PC-9 (cell line): ENCODE measurements at regions of chr3 and their contacts with region 1.

Region 1: GRCh38 chr3:196073188-196073838 is 8.6 kb downstream of the TFRC start:
- DNase-seq: peak in 1 of 2 experiments; percentile 68
- H3K4me3 ChIP-seq: no peak overlapping the region
- H3K27ac ChIP-seq: peak overlapping the region; percentile 10; the same call in 1 of the 2 replicates
- H3K4me1 ChIP-seq: no peaks in the 10 kb centered on the region; the same call in 1 of the 2 replicates
- H3K27me3 ChIP-seq: no peaks in the 10 kb centered on the region
- CTCF ChIP-seq: peak; percentile 96

Region 2: GRCh38 chr3:196044513-196044912 is 28.8 kb before region 1 on chr3:
- CTCF ChIA-PET with region 1: no interaction called
- POLR2A ChIA-PET with region 1: interaction called, 11 read pairs
- intact Hi-C with region 1: no loop called
- DNase-seq: peak in 1 of 2 experiments; percentile 22
- H3K4me3 ChIP-seq: no peak overlapping the region
- H3K27ac ChIP-seq: no peak overlapping the region
- H3K4me1 ChIP-seq: no peaks in the 10 kb centered on the region
- H3K27me3 ChIP-seq: no peaks in the 10 kb centered on the region
- CTCF ChIP-seq: no peak

Region 3: GRCh38 chr3:196192036-196192523 is 118.8 kb after region 1 on chr3:
- CTCF ChIA-PET with region 1: interaction called, 8 read pairs
- POLR2A ChIA-PET with region 1: interaction called, 12 read pairs
- intact Hi-C with region 1: loop called (anchors 1 kb)
- DNase-seq: no peak
- H3K4me3 ChIP-seq: no peak overlapping the region
- H3K27ac ChIP-seq: no peak overlapping the region
- H3K4me1 ChIP-seq: peaks cover 14% of the 10 kb centered on the region
- H3K27me3 ChIP-seq: no peaks in the 10 kb centered on the region
- CTCF ChIP-seq: no peak; the same call in 1 of the 2 replicates